Activated T-helper 1 cell treated with anti-CD3 and anti-CD28 coated beads, Interleukin-12 subunit alpha, Interleukin-12 subunit beta, Interleukin-2, Interleukin-4 antibody, amounts not matched to agents 30 ng/mL and 10 ng/mL and 1 ng/mL, durations not matched to agents 14 hours and 24 hours and 36 hours (primary cell): ENCODE measurements at regions of chr18 and their contacts with region 1.

Region 1: DNA sequence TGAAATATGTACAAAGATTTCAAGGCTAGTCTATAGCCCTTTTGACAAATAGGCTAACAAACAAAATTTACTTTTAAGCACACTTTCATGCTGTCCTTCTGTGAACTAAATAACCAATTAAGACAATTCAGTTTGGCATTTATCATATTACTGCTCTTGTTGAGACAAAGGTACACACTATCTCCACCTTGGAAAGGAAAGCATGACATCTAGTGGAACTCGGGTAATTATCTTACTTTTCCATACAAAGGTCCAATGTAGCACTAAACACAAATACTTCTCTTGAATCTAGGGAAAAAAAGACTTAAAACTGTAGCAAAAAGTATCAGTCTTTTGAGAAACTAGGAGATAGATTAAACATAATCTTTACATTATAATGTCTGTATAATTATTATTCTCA is 125.0 kb upstream of the CD226 start:
- DNase-seq: no peak
- H3K4me3 Mint-ChIP-seq: no peak overlapping the region
- H3K27ac Mint-ChIP-seq: no peak overlapping the region
- H3K4me1 Mint-ChIP-seq: peaks cover 7% of the 10 kb centered on the region
- H3K27me3 Mint-ChIP-seq: no peaks in the 10 kb centered on the region

Region 2: GRCh38 chr18:69469444-69469919 is 603.2 kb before region 1 on chr18:
- intact Hi-C with region 1: loop called (anchors 5 kb)
- DNase-seq: no peak
- H3K4me3 Mint-ChIP-seq: no peak overlapping the region
- H3K27ac Mint-ChIP-seq: no peak overlapping the region
- H3K4me1 Mint-ChIP-seq: no peaks in the 10 kb centered on the region
- H3K27me3 Mint-ChIP-seq: no peaks in the 10 kb centered on the region

Region 3: DNA sequence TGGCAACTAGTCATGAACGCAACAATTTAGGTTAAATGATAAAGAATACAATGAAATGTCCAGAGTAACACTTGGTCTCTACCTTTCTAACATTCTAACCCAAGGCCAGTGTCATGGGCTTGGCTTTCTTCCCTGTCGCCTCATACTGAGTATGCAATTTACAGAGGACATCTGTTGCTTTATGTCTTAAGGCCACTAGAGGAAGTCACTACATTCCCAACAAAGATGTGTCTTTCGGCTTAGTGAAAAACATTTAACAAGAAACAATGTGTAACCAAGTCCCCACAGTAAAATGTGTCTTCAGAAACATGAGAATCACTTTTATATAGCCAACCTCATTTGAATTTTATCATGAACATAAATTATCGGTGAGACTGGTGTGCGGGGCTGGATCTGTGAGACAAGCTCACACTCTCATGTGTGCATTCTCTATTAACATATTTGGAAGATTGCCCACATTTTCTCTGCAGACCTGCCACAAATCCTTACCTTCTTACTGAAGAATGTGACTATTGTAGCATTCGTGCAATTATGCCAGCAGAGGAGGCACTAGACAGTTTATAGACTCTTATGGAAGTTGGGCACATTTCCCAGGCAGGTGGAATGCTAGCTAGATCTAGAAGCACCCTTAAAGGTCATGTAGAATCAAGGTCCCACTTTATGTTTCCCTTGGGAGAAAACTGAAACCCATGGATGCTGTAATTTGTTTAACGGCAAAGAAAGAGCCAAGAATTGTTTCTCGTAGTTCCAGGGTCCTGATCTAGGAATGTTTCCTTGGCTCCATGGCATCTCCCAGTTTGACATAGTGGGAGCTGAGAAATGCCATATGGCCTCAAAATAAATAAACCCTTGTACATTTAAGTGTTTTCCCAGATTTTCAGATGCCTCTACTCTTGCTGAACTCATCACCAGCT is 226.8 kb before region 1 on chr18:
- intact Hi-C with region 1: loop called (anchors 1 kb)
- DNase-seq: no peak
- H3K4me3 Mint-ChIP-seq: no peak overlapping the region
- H3K27ac Mint-ChIP-seq: no peak overlapping the region
- H3K4me1 Mint-ChIP-seq: no peaks in the 10 kb centered on the region
- H3K27me3 Mint-ChIP-seq: peaks cover 2% of the 10 kb centered on the region

Region 4: GRCh38 chr18:69978732-69979715 is 93.7 kb before region 1 on chr18:
- intact Hi-C with region 1: loop called (anchors 5 kb)
- DNase-seq: no peak
- H3K4me3 Mint-ChIP-seq: peak overlapping the region; percentile 40
- H3K27ac Mint-ChIP-seq: peak overlapping the region; percentile 74
- H3K4me1 Mint-ChIP-seq: peaks cover 50% of the 10 kb centered on the region
- H3K27me3 Mint-ChIP-seq: no peaks in the 10 kb centered on the region